ENCODE measurements at regions of chr18 and their contacts with region 1.

Region 1: DNA sequence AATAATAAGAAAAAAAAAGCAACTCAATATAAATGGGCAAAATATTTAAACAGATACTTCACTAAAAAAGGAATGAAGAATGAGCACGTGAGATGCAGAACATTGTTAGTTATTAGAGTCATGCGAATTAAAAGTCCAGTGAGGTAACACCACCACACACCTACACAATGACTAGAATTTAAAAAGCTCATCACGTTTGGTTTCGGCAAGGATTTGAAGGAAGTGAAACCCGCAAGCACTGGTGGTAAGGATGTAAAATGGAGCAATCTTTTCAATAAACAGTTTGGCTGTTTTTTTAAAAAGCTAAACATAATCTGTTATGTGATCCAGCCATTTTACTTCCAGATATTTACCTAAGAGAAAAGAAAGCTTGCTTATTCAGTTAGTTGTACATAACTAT is 1181.6 kb upstream of the CELF4 start:
- DNase-seq: no peak
- H3K4me3 ChIP-seq: no peak overlapping the region
- H3K4me3 Mint-ChIP-seq: no peak overlapping the region
- H3K27ac ChIP-seq: no peak overlapping the region
- H3K27ac Mint-ChIP-seq: no peak overlapping the region
- H3K4me1 ChIP-seq: no peaks in the 10 kb centered on the region
- H3K4me1 Mint-ChIP-seq: peaks cover 0 to 5% (median 2%) of the 10 kb centered on the region in 4 donors
- H3K27me3 ChIP-seq: no peaks in the 10 kb centered on the region
- H3K27me3 Mint-ChIP-seq: no peaks in the 10 kb centered on the region

Region 2: GRCh38 chr18:38698088-38698487 is 49.1 kb before region 1 on chr18:
- CTCF ChIA-PET with region 1: no interaction called
- POLR2A ChIA-PET with region 1: no interaction called
- intact Hi-C with region 1: loop called (anchors 1 kb)
- DNase-seq: no peak
- H3K4me3 ChIP-seq: no peak overlapping the region
- H3K4me3 Mint-ChIP-seq: no peak overlapping the region
- H3K27ac ChIP-seq: no peak overlapping the region
- H3K27ac Mint-ChIP-seq: no peak overlapping the region
- H3K4me1 ChIP-seq: no peaks in the 10 kb centered on the region
- H3K4me1 Mint-ChIP-seq: no peaks in the 10 kb centered on the region
- H3K27me3 ChIP-seq: no peaks in the 10 kb centered on the region
- H3K27me3 Mint-ChIP-seq: no peaks in the 10 kb centered on the region

Measured in CD4-positive, alpha-beta memory T cell (primary cell).